Activated T-helper 2 cell treated with anti-CD3 and anti-CD28 coated beads, Interferon-gamma antibody, Interleukin-2, Interleukin-4, amounts not matched to agents 10 μg/mL and 5 μg/mL and 100 μg/mL, durations not matched to agents 14 hours and 24 hours and 36 hours (primary cell): ENCODE measurements at regions of chr1 and their contacts with region 1.

Region 1: DNA sequence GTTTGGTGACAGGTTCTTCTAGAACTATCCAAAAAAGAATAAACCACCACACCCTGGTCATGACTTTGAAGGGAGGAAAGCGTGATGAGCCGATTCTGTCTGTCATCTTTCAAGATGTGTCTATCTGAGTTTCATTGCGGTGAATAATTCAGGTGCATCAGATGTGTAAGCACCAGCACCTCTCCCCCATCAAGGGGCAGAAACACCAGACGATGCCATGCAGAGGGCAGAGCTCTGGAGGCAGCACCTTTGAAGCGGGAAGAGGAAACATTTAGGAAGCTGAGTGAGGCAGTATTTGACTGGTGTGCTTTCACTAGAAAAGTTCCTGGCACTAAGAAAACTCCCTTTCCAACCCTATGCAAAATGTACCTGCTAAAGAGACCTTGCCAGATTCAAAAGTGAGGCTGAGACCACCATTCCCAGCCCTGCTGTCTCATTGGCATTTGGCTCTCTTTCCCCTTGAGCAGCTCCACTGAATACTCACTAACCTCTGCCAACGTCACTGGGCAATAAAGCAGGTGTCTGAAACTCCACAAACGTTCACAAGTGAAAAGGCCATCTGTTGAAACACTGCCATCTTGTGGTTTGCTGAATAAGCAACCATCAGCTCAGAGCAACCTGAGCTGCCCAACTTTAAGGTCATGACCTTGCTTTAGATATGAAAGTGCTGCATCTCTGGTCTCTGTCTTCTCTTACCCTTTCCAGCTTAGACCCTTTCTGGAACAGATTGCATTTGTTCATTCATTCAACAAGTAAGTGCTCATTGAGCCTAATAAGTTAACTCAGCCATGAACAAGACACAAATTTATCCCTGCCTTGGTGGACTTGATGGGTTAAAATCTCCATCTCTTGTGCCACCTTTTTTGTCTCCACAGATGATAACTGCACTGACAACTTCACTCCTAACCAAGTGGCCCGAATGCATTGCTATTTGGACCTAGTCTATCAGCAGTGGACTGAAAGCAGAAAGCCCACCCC is 228.6 kb downstream of the PAPPA2 start:
- DNase-seq: no peak
- H3K4me3 Mint-ChIP-seq: no peak overlapping the region
- H3K27ac Mint-ChIP-seq: no peak overlapping the region
- H3K4me1 Mint-ChIP-seq: no peaks in the 10 kb centered on the region
- H3K27me3 Mint-ChIP-seq: no peaks in the 10 kb centered on the region

Region 2: GRCh38 chr1:176374967-176375569 is 316.5 kb before region 1 on chr1:
- intact Hi-C with region 1: loop called (anchors 2 kb)
- DNase-seq: peak; percentile 20
- H3K4me3 Mint-ChIP-seq: no peak overlapping the region
- H3K27ac Mint-ChIP-seq: no peak overlapping the region
- H3K4me1 Mint-ChIP-seq: no peaks in the 10 kb centered on the region
- H3K27me3 Mint-ChIP-seq: no peaks in the 10 kb centered on the region

Region 3: GRCh38 chr1:176628775-176629174 is 62.8 kb before region 1 on chr1:
- intact Hi-C with region 1: no loop called
- DNase-seq: no peak
- H3K4me3 Mint-ChIP-seq: no peak overlapping the region
- H3K27ac Mint-ChIP-seq: no peak overlapping the region
- H3K4me1 Mint-ChIP-seq: no peaks in the 10 kb centered on the region
- H3K27me3 Mint-ChIP-seq: no peaks in the 10 kb centered on the region